Endothelial cell of umbilical vein (primary cell): ENCODE measurements at regions of chr4 and their contacts with region 1.

Region 1: GRCh38 chr4:74499986-74500781 is 55.2 kb downstream of the AREG start:
- DNase-seq: no peak
- H3K4me3 ChIP-seq: no peak overlapping the region
- H3K27ac ChIP-seq: no peak overlapping the region
- H3K4me1 ChIP-seq: peaks cover 23% of the 10 kb centered on the region
- H3K27me3 ChIP-seq: no peaks in the 10 kb centered on the region
- CTCF ChIP-seq: no peak
- POLR2A ChIP-seq: no peak

Region 2: DNA sequence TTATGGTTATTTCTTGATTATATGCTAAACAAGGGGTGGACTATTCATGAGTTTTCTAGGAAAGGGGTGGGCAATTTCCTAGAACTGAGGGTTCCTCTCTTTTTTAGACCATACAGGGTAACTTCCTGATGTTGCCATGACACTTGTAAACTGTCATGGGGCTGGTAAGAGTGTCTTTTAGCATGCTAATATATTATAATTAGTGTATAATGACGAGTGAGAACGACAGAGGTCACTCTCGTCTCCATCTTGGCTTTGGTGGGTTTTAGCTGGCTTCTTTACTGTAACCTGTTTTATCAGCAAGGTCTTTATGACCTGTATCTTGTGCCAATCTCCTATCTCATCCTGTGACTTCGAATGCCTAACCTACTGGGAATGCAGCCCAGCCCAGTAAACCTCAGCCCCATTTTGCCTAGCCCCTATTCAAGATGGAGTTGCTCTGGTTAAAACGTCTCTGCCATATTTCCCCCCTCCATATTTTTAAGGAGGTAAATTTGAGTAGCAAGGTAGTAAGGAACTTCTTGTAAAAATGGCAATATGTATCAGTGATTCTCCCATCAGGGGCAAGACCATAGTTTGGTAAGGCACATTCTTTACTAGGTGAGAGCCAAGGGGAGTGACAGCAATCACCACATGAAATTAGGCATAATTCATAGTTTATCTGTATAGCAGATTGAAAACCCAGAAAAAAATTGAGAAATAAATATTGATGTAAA is 403.8 kb before region 1 on chr4:
- CTCF ChIA-PET with region 1: no interaction called
- POLR2A ChIA-PET with region 1: no interaction called
- dilution Hi-C with region 1: no loop called
- intact Hi-C with region 1: no loop called
- DNase-seq: peak; percentile 66
- H3K4me3 ChIP-seq: no peak overlapping the region
- H3K27ac ChIP-seq: no peak overlapping the region
- H3K4me1 ChIP-seq: peaks cover 41% of the 10 kb centered on the region
- H3K27me3 ChIP-seq: no peaks in the 10 kb centered on the region
- CTCF ChIP-seq: no peak
- POLR2A ChIP-seq: no peak

Region 3: GRCh38 chr4:74376888-74377483 is 123.2 kb before region 1 on chr4:
- CTCF ChIA-PET with region 1: interaction called, 7 read pairs
- POLR2A ChIA-PET with region 1: no interaction called
- dilution Hi-C with region 1: no loop called
- intact Hi-C with region 1: loop called (anchors 1 kb)
- DNase-seq: peak; percentile 67
- H3K4me3 ChIP-seq: no peak overlapping the region
- H3K27ac ChIP-seq: no peak overlapping the region
- H3K4me1 ChIP-seq: peaks cover 7% of the 10 kb centered on the region
- H3K27me3 ChIP-seq: no peaks in the 10 kb centered on the region
- CTCF ChIP-seq: peak; percentile 31
- POLR2A ChIP-seq: no peak

Region 4: DNA sequence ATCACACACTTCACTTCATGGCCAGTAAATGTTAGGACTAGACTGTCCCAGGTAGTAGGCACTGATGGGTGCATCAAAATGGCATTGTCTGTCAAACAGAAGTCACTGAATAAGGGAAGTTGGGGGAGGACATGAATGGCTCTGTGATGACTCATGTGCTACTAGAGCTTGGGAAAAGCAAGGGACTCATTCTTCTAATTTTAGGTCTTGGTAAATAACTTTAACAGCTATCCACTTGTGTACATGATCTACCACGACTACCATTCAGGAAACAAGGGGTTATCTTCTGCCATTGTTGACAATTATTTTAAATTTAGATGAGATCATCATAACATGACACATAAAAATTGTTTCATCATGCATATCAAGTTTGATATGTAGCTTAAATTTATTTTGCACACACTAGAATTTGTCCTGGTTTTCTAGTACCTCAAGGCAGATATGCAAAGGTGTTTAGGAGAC is 49.0 kb before region 1 on chr4:
- CTCF ChIA-PET with region 1: no interaction called
- POLR2A ChIA-PET with region 1: no interaction called
- dilution Hi-C with region 1: no loop called
- intact Hi-C with region 1: loop called (anchors 1 kb)
- DNase-seq: peak; percentile 72
- H3K4me3 ChIP-seq: no peak overlapping the region
- H3K27ac ChIP-seq: peak overlapping the region; percentile 12
- H3K4me1 ChIP-seq: peaks cover 13% of the 10 kb centered on the region
- H3K27me3 ChIP-seq: no peaks in the 10 kb centered on the region
- CTCF ChIP-seq: no peak
- POLR2A ChIP-seq: no peak

Region 5: GRCh38 chr4:74473155-74473811 is 26.9 kb before region 1 on chr4:
- CTCF ChIA-PET with region 1: interaction called, 3 read pairs
- POLR2A ChIA-PET with region 1: no interaction called
- dilution Hi-C with region 1: no loop called
- intact Hi-C with region 1: loop called (anchors 1 kb)
- DNase-seq: peak; percentile 84
- H3K4me3 ChIP-seq: no peak overlapping the region
- H3K27ac ChIP-seq: peak overlapping the region; percentile 42
- H3K4me1 ChIP-seq: peaks cover 22% of the 10 kb centered on the region
- H3K27me3 ChIP-seq: no peaks in the 10 kb centered on the region
- CTCF ChIP-seq: no peak
- POLR2A ChIP-seq: no peak

Region 6: GRCh38 chr4:74543231-74543670 is 43.1 kb after region 1 on chr4:
- CTCF ChIA-PET with region 1: interaction called, 5 read pairs
- POLR2A ChIA-PET with region 1: no interaction called
- dilution Hi-C with region 1: no loop called
- intact Hi-C with region 1: loop called (anchors 1 kb)
- DNase-seq: no peak
- H3K4me3 ChIP-seq: no peak overlapping the region
- H3K27ac ChIP-seq: no peak overlapping the region
- H3K4me1 ChIP-seq: peaks cover 48% of the 10 kb centered on the region
- H3K27me3 ChIP-seq: no peaks in the 10 kb centered on the region
- CTCF ChIP-seq: no peak
- POLR2A ChIP-seq: no peak

Region 7: GRCh38 chr4:75135068-75135825 is 635.1 kb after region 1 on chr4:
- CTCF ChIA-PET with region 1: no interaction called
- POLR2A ChIA-PET with region 1: no interaction called
- dilution Hi-C with region 1: no loop called
- intact Hi-C with region 1: no loop called
- DNase-seq: no peak
- H3K4me3 ChIP-seq: no peak overlapping the region
- H3K27ac ChIP-seq: no peak overlapping the region
- H3K4me1 ChIP-seq: no peaks in the 10 kb centered on the region
- H3K27me3 ChIP-seq: no peaks in the 10 kb centered on the region
- CTCF ChIP-seq: no peak
- POLR2A ChIP-seq: no peak